Aorta (tissue), 5 donors: ENCODE measurements at regions of chr5 and their contacts with region 1.

Region 1: GRCh38 chr5:95858661-95859326 is 36.3 kb upstream of the GLRX start:
- DNase-seq: peak; percentile 97 to 98
- ATAC-seq: peak; percentile 95
- H3K4me3 ChIP-seq: peak overlapping the region; percentile 9 to 27
- H3K27ac ChIP-seq: peak overlapping the region; percentile 47 to 100
- H3K4me1 ChIP-seq: peaks cover 0 to 7% of the 10 kb centered on the region in 2 donors
- H3K27me3 ChIP-seq: no peaks in the 10 kb centered on the region

Region 2: DNA sequence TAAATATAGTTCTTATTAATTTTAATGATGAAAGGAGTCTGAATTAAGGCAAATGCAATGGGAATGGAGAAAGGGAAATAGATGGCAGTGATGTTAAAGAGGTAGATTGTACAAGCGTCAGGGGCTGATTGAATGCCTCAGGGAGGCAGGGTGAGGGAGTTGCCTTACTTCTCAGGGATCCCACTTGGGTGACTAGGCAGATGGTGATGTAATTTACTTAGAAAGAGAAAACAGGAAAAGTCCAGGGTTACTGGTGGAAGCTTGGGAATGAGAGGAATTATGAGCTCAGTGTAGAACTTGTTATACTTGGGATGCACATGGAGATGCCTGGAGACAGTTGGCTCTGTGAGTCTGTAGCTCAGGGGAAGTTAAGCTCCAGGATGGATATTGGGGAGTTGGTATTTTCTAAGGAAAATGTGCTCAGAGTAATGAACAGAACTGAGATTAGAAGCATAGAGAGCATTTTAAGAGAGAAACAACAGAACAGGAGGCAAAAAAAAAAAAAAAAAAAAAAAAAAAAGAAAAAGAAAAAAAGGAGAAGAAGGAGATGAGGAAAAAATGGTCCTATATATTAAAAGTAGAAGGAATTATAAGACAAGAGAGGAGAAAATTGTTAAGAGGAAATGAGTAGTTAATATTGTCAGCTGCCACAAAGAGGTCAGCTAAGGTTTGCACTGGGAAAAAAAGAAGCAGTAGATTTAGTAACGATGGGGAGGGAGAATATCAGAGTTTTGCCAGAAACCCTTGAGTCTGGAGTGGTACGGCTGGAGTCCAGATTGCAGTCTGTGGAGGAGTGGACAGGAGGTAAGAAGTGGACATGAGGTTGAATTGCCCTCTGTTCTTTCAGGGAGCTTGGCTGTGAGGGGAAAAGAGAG is 190.8 kb after region 1 on chr5:
- intact Hi-C with region 1: loop called in 1 of 2 experiments (anchors 10 kb)
- DNase-seq: no peak
- ATAC-seq: peak; percentile 25
- H3K4me3 ChIP-seq: no peak overlapping the region
- H3K27ac ChIP-seq: peak overlapping the region in 1 of 2 donors; percentile 46
- H3K4me1 ChIP-seq: peaks cover 0 to 4% of the 10 kb centered on the region in 2 donors
- H3K27me3 ChIP-seq: no peaks in the 10 kb centered on the region

Region 3: DNA sequence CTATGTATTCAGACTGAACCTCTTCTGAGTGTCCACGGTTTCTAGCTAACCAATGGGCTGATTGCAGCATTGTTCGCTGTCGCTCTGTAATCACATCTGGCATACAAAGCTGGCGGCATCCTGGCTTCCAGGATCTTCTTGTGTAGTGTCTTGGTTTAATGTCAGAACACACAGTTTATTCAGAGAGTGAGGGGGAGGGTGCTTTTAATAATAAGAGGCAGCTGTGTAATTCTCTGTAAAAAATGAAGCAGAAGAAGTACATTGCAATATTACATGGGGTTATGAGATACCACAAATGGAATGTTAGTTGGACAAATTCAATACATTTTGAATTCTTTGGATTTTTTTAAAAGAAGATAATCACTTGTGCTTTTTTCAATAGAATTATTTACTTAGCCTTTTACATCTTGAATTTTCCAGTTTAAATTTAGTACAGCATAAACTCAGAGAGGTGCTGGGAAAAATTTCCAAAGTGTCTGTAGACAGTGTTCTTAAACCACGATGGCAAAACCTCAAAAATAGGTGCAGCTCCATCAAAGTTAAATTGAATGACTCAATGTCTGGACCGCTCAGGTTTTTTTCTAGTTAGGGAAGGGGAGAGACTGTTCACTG is 368.3 kb after region 1 on chr5:
- intact Hi-C with region 1: loop called in 1 of 2 experiments (anchors 10 kb)
- DNase-seq: peak; percentile 54 to 76
- ATAC-seq: peak; percentile 50
- H3K4me3 ChIP-seq: peak overlapping the region in 1 of 2 donors; percentile 64
- H3K27ac ChIP-seq: peak overlapping the region; percentile 38 to 95
- H3K4me1 ChIP-seq: peaks cover 0 to 3% of the 10 kb centered on the region in 2 donors
- H3K27me3 ChIP-seq: no peaks in the 10 kb centered on the region

Region 4: DNA sequence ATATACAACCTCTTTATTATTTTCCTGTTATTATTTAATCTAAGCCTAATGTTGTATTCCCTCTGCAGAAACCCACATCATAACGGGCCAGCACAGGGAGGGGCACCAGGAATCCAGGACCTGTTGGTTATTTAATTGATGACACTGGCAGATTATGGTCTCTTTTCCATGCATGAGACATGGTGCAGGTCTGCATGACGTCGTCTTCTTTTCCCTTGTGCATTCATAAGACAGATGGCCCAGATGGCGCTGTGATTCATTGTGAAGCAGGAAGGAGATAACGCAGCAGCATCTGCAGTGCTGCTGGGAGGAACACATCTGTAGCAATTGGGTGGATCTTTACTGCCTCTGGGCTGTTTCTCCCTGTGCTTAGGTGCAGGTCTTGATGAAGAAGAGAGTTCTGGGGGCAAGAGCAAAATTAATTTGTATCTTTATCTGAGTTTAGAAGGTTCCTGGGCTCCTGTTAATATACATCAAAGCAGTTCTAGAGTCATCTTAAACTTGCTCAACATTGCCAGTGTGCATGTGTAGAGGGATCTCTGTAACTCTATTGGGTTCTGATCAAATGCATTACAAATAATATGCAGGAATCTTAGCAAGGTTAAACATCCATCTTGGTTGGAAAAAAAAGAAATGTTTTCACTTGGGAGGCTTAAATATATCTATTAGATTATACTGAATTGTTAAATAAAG is 398.1 kb after region 1 on chr5:
- intact Hi-C with region 1: loop called in 1 of 2 experiments (anchors 5 kb)
- DNase-seq: no peak
- ATAC-seq: no peak
- H3K4me3 ChIP-seq: no peak overlapping the region
- H3K27ac ChIP-seq: peak overlapping the region in 1 of 2 donors; percentile 71
- H3K4me1 ChIP-seq: peaks cover 5 to 12% of the 10 kb centered on the region in 2 donors
- H3K27me3 ChIP-seq: no peaks in the 10 kb centered on the region

Region 5: GRCh38 chr5:96601811-96602244 is 743.0 kb after region 1 on chr5:
- intact Hi-C with region 1: loop called (anchors 5 kb)
- DNase-seq: no peak
- ATAC-seq: peak; percentile 83
- H3K4me3 ChIP-seq: no peak overlapping the region
- H3K27ac ChIP-seq: no peak overlapping the region
- H3K4me1 ChIP-seq: no peaks in the 10 kb centered on the region
- H3K27me3 ChIP-seq: no peaks in the 10 kb centered on the region